ENCODE measurements at regions of chr17 and their contacts with region 1.

Region 1: GRCh38 chr17:75978938-75979704 is at the starts of genes ACOX1 and TEN1:
- DNase-seq: peak; percentile 98 to 99
- ATAC-seq: peak; percentile 97 to 99 (median 98)
- H3K4me3 ChIP-seq: peak within 1 kb of the TSS; percentile 70 to 97 (median 82)
- H3K27ac ChIP-seq: peak within 1 kb of the TSS; percentile 96 to 99 (median 98)
- H3K4me1 ChIP-seq: peaks cover 0 to 77% (median 47%) of the 10 kb centered on the region in 9 donors
- H3K27me3 ChIP-seq: no peaks in the 10 kb centered on the region
- CTCF ChIP-seq: peak in 7 of 9 donors; percentile 19 to 69 (median 46)
- total RNA-seq, gene ACOX1: 76.0 to 105 (median 94.0) TPM
- total RNA-seq, gene TEN1: 4.4 to 13.3 (median 9.0) TPM

Region 2: DNA sequence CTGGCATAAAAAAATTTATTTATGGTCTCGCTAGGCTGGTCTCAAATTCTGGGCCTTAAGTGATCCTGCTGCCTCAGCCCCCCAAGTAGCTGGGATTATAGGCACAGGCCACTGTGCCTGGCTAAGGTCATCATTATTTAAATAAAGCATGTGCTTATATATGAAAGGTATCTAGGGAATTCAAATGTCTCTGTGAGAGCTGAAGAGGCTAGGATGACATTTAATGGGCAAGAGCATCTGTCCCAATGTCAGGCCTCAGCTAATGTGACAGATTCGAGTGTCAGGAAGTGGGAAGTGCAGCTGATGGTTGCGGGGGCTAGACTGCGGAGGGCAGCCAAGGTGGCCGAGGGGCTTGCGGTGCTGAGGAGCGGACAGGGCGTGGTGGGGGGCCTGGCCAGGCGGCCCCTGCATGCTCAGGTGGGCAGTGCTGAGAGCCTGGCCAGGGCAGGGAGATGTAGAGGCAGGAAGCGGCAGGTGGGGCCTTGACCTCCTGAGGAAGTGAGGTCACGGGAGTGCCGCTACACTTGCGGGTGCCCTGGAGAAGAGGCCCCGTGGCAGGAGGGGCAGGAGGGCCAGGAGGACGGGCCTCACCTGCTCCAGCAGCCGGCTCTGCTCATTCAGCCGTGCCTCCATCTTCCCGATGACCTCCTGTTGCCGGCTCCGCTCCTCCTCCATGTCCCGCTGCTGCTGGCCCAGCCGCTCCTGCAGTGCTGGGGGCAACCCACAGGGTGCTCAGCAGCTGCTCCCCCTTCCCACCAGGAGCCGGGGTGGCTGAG is 61.8 kb before region 1 on chr17:
- intact Hi-C with region 1: no loop called
- DNase-seq: no peak
- ATAC-seq: no peak
- H3K4me3 ChIP-seq: no peak overlapping the region
- H3K27ac ChIP-seq: no peak overlapping the region
- H3K4me1 ChIP-seq: no peaks in the 10 kb centered on the region
- H3K27me3 ChIP-seq: no peaks in the 10 kb centered on the region
- CTCF ChIP-seq: no peak

Region 3: GRCh38 chr17:75940724-75941441 is 38.2 kb before region 1 on chr17 and contains the start of gene FBF1:
- intact Hi-C with region 1: loop called in 2 of 10 experiments (anchors 5 kb)
- DNase-seq: peak; percentile 93 to 94
- ATAC-seq: peak; percentile 99
- H3K4me3 ChIP-seq: peak within 1 kb of the TSS; percentile 40 to 94 (median 74)
- H3K27ac ChIP-seq: peak within 1 kb of the TSS in 9 of 10 donors; percentile 33 to 86 (median 79)
- H3K4me1 ChIP-seq: peaks cover 0 to 16% (median 10%) of the 10 kb centered on the region in 9 donors
- H3K27me3 ChIP-seq: no peaks in the 10 kb centered on the region
- CTCF ChIP-seq: no peak
- total RNA-seq, gene FBF1: 2.1 to 6.3 (median 2.8) TPM

Measured in heart right ventricle (tissue), 16 donors.